Pancreas (tissue), 10 donors: ENCODE measurements at regions of chr3 and their contacts with region 1.

Region 1: DNA sequence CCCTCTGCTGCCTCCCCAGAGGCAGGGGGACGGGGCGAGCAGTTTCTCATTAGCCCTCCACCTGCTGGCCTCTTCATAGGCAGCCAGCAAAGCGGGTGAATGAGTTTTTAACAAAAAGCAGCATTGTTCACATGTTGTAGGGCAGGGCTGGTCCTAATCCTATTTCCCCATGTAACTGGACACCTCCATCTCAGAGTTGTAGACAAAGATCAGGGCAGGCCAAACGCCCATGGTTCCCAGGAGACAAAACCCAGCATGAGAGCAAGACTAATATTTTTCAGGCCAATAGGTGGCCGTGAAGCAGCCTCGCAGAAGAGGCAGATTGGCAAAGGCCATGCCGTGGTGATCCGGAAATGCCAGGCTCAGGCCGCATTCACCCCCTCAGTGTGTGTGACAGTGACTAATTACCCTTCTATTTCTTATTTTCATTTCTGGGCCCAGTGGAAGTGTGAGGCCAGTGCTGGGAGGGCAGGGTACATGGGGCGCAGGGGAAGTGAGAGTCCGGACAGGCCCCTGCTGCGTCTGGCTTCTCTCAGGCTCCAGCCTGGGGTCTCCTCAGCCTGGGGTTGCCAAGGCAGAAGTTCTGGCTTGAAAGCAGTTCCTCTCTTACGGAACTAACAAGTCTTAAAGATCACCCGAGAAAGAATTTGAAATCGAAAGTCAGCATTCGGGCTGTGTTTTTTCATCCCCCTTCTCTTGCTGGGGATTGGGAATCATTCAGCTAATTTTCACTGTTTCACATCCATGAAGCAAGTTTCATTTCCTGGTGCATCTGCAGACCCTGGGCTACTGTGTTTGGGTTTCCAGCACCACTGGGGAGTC is 64.8 kb downstream of the BOC start:
- DNase-seq: peak in 2 of 6 donors; percentile 32 to 46
- ATAC-seq: peak; percentile 24 to 60 (median 46)
- H3K4me3 ChIP-seq: no peak overlapping the region
- H3K27ac ChIP-seq: peak overlapping the region; percentile 36 to 78 (median 73)
- H3K4me1 ChIP-seq: peaks cover 22 to 52% (median 38%) of the 10 kb centered on the region in 3 donors
- H3K27me3 ChIP-seq: no peaks in the 10 kb centered on the region
- CTCF ChIP-seq: no peak

Region 2: DNA sequence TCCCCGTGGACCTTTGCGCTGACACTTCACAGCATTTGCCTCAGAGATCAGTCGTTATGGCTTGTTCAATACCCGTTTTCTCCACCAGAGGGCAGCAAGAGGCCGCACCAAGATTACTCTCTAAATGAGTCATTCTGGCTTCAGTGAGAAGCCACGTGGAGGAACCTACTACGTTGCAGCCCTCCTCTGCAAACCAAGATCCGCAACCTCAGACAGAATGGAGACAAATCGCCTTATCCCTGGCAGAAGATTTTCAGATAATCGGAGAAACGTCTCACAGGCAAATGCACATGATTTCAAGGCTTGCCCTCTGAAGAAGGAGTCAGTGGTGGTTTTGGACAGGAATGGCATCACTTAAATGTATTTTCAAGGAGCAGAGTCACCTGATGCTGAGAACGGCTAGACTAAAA is 224.8 kb before region 1 on chr3:
- intact Hi-C with region 1: loop called in 1 of 3 experiments (anchors 5 kb)
- DNase-seq: peak; percentile 53 to 85 (median 68)
- ATAC-seq: peak; percentile 90 to 100 (median 98)
- H3K4me3 ChIP-seq: no peak overlapping the region
- H3K27ac ChIP-seq: no peak overlapping the region
- H3K4me1 ChIP-seq: no peaks in the 10 kb centered on the region
- H3K27me3 ChIP-seq: no peaks in the 10 kb centered on the region
- CTCF ChIP-seq: peak; percentile 89 to 95 (median 93)

Region 3: GRCh38 chr3:113329757-113330156 is 53.6 kb after region 1 on chr3:
- intact Hi-C with region 1: no loop called
- DNase-seq: no peak
- ATAC-seq: no peak
- H3K4me3 ChIP-seq: no peak overlapping the region
- H3K27ac ChIP-seq: no peak overlapping the region
- H3K4me1 ChIP-seq: no peaks in the 10 kb centered on the region
- H3K27me3 ChIP-seq: no peaks in the 10 kb centered on the region
- CTCF ChIP-seq: no peak

Region 4: GRCh38 chr3:113531826-113532697 is 255.9 kb after region 1 on chr3 and contains the start of gene SIDT1:
- intact Hi-C with region 1: no loop called
- DNase-seq: peak in 5 of 6 donors; percentile 20 to 68 (median 40)
- ATAC-seq: peak; percentile 72 to 86 (median 84)
- H3K4me3 ChIP-seq: peak within 1 kb of the TSS; percentile 54 to 88 (median 74)
- H3K27ac ChIP-seq: peak within 1 kb of the TSS; percentile 34 to 75 (median 42)
- H3K4me1 ChIP-seq: peaks cover 0 to 17% (median 0%) of the 10 kb centered on the region in 3 donors
- H3K27me3 ChIP-seq: no peaks in the 10 kb centered on the region
- CTCF ChIP-seq: no peak
- total RNA-seq, gene SIDT1: 0.28 to 2.6 (median 1.0) TPM